ENCODE measurements at regions of chr9 and their contacts with region 1.

Region 1: DNA sequence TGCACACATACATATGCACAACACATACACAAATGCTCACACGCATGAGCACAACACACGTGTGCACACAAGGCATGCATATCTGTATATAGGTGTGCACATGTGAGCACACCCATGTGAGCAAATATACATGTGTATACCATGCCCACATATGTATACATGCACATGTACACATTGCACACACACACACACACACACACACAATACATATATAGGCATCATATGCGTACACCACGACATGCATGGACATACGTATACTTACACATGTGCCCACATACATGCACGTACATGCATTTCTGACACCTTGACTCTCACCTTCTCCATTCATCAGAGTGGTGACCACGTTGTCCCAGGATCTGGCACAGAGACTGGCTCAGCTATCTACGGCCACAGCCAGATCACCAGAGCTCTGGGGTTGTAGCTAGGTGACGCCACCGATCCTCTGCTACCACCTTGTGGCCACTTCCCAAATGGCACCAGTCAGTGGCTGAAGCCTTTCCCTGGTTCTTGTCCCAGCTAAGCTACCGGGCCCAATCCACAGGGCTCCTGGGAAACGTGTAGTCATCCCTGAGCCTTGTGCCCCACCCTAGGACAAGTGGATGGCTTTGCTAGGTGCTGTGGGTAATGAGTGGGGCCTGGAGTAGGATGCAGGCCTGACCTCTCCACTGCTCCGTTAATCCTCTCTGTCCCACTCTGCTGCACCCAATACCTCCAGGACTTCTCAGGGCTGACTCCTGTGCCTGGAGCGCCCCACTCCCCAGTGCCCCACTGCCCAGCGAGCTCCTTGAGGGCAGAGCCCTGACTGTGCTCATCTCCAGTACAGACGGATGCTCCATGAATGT is 194.4 kb downstream of the RGS3 start:
- DNase-seq: no peak
- H3K4me3 ChIP-seq: no peak overlapping the region
- CTCF ChIP-seq: peak; percentile 96

Region 2: GRCh38 chr9:113275157-113276131 is 382.5 kb before region 1 on chr9 and contains the starts of genes CDC26 and PRPF4:
- CTCF ChIA-PET with region 1: interaction called, 83 read pairs
- POLR2A ChIA-PET with region 1: no interaction called
- DNase-seq: peak; percentile 94
- H3K4me3 ChIP-seq: peak within 1 kb of the TSS; percentile 97
- CTCF ChIP-seq: no peak

Region 3: GRCh38 chr9:113401027-113401792 is 256.7 kb before region 1 on chr9 and contains the start of gene ALAD:
- CTCF ChIA-PET with region 1: interaction called, 135 read pairs
- POLR2A ChIA-PET with region 1: no interaction called
- DNase-seq: peak; percentile 80
- H3K4me3 ChIP-seq: peak within 1 kb of the TSS; percentile 92
- CTCF ChIP-seq: peak; percentile 99

Region 4: DNA sequence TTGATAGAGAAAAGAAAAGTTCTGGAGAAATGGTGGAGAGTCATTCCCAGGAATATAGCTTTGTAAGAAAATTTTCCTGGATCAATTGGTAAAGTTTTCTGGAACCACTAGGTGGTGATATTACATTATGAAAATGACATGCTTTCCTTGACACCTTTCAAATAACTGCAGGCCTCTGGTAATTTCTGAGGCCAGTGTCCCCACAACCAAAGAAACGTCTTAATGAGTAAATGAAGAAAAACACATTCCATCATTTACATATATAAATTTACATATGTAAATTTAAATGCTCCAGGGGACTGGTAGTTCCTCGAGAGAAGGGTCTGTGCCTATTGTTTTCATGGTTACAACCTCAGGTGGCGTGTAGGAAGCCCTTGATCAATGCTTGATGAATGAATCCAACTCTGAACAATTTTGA is 211.6 kb before region 1 on chr9:
- CTCF ChIA-PET with region 1: interaction called, 482 read pairs
- POLR2A ChIA-PET with region 1: no interaction called
- DNase-seq: no peak
- H3K4me3 ChIP-seq: no peak overlapping the region
- CTCF ChIP-seq: peak; percentile 13

Region 5: DNA sequence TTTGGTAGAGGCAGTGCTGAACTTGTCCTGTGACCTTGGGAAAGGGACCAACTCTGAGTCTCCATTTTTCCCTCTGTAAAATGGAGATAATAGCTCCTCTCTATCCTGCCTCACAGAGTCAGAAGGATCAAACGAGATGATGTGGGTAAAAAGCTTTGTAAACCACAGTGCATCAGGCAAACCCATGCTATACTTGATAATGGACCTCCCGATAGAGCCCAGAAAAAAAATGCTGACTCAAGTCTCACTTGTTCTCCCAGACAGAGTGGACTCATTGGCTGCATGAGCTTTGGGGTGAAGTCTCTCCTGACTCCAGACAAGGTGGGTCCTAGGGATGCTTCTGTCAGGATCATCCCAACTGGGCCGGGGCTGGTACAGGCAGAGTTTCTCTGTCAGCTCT is 162.4 kb before region 1 on chr9:
- CTCF ChIA-PET with region 1: interaction called, 10 read pairs
- POLR2A ChIA-PET with region 1: no interaction called
- DNase-seq: no peak
- H3K4me3 ChIP-seq: no peak overlapping the region
- CTCF ChIP-seq: no peak

Region 6: GRCh38 chr9:113591001-113591898 is 66.7 kb before region 1 on chr9:
- CTCF ChIA-PET with region 1: interaction called, 1,449 read pairs
- POLR2A ChIA-PET with region 1: interaction called, 22 read pairs
- DNase-seq: no peak
- H3K4me3 ChIP-seq: no peak overlapping the region
- CTCF ChIP-seq: peak; percentile 86

Region 7: DNA sequence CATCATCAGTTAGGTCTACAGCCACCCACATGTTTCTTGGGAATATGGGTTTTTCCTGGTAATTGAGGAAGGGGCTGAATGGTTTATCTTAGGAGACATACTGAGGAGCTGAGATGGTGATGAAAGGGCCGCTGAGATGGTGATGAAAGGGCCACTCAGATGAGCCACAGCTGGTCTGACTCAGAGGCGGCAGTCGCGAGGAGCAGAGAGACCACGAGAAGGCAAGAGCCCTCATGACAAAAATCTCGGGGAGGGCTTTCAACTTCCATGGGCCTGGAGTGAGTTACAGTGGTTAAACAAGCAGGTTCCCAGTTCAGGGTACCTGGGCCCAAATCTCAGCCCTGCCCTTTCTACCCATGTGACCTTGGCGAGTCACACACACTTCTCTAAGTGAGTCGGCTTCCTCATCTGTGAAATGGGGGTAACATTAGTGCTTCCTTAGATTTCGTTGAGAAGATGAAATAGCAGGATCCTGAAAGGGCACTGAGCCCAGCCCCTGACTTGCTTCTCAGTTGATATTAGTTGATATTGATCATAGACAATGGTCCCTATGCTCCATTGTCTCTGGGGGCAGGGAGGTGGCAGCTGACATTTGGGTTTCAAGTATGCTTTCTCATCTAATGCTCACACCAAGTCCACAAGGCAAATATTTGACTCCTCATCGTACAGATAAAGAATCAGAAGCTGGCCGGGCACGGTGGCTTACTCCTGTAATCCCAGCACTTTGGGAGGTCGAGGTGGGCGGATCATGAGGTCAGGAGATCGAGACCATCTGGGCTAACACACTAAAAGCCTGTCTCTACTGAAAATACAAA is 24.9 kb before region 1 on chr9:
- CTCF ChIA-PET with region 1: interaction called, 33 read pairs
- POLR2A ChIA-PET with region 1: no interaction called
- DNase-seq: no peak
- H3K4me3 ChIP-seq: no peak overlapping the region
- CTCF ChIP-seq: no peak

Region 8: DNA sequence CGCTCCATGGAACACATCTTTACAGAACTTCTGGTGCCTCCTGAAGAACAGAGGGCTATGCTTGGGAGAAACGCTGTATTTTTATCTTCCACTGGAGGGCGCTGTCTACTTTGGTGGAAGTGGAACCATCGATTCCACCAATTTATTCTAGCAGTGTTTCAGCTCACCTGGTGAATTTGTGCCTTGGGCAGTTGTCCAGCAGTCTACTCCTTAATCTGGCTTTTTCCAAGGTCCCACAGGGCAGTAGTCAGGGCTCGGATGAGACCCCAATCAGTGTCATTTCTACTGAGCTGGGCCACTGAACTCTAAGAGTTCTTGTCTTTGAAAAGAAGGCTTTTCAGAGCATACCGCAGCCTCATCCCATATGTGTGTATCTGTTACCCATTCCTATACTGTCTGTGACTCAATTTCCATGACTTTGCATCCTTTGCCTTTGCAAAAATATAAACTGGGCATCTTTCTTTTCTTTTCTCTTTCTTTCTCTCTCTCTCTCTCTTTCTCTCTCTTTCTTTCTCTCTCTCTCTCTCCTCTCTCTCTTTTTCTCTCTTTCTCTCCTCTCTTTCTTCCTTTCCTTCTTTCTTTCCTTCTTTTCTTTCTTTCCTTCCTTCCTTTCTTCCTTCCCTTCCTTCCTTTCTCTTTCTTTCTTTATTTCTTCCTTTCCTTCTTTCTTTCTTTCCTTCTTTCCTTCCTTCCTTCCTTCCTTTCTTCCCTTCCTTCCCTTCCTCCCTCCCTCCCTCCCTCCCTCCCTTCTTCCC is 79.8 kb after region 1 on chr9:
- CTCF ChIA-PET with region 1: no interaction called
- POLR2A ChIA-PET with region 1: no interaction called
- DNase-seq: no peak
- H3K4me3 ChIP-seq: no peak overlapping the region
- CTCF ChIP-seq: peak; percentile 74

Measured in AG04449 (cell line).